ENCODE measurements at regions of chr9 and their contacts with region 1.

Region 1: DNA sequence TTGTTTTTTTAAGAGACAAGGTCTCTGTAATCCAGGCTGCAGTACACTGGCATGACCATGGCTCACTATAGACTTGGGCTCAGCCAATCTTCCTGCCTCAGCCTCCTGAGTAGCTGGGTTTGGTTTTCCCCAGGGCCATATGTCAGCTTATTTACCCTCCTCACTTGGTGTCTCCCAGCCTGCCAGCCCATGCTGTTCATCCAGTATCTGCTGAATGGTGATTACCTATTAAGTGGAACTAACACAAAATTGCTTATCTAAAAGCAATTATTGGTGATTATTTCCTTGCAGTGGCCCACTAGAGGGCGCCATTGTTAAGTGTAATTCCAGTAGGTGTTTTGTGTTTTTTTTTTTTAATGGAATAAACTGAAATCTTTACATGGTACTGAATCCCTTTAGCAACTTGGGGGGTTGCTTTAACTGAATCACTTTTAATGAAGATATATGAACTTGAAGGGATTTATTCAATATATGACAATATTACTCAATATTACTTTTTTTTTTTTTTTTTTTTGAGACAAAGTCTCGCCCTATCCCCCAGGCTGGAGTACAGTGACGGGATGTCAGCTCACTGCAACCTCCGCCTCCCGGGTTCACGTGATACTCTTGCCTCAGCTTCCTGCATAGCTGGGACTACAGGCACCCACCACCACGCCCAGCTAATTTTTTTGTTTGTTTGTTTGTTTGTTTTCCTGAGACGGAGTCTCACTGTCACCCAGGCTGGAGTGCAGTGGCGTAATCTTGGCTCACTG is 13.8 kb downstream of the EXOSC2 start:
- DNase-seq: no peak
- H3K4me3 ChIP-seq: no peak overlapping the region
- H3K27ac ChIP-seq: no peak overlapping the region
- H3K4me1 ChIP-seq: peaks cover 4% of the 10 kb centered on the region
- H3K27me3 ChIP-seq: no peaks in the 10 kb centered on the region
- CTCF ChIP-seq: peak; percentile 48 to 71 (median 54)
- POLR2A ChIP-seq: no peak

Region 2: DNA sequence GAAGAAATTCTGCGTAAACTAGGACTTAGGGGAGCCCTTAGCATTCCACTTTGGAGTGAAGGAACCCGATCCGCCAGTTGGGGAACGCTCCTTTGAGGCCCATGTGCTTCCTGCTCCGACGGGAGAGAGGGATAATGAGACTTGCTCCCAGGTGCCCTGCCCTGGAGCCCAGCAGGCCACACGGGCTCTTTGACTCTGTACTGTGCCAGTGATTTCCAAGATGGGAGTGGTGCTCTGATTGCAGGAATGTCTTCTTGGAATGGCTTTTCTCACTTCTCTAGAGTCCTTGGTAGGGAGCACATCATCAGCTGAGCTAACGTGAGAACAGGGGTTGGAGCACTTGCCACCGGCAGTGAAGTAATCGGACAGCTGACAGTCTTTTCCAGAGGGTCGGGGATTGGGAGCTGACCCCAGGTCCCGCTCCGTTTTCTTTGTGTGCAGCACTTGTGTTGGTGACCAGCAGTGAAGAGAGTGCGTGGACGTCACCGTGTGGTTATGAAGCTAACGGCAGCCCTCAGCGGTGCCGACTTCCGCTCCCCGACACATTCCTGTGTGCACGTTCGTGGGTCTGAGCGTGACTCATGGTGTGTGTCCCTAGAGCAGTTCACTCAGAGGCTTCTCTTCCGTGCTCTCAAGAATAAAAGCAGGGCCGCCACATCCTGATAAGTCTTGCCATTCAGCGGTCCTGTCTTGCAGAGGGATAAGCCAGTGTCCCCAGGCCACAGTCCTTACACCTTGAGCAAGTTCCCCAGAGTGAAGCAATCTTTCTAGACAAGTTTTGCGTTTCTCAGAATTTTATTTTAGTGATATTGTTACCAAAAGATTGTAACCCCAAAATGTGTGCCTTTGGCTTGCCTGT is 153.3 kb after region 1 on chr9:
- intact Hi-C with region 1: loop called (anchors 5 kb)
- DNase-seq: no peak
- H3K4me3 ChIP-seq: peak overlapping the region in 1 of 2 donors; percentile 5
- H3K27ac ChIP-seq: peak overlapping the region; percentile 62
- H3K4me1 ChIP-seq: peaks cover 47% of the 10 kb centered on the region
- H3K27me3 ChIP-seq: no peaks in the 10 kb centered on the region
- CTCF ChIP-seq: peak in 1 of 3 experiments; percentile 51
- POLR2A ChIP-seq: no peak

Measured in vagina (tissue), 2 donors.